HepG2 (cell line): ENCODE measurements at regions of chr2 and their contacts with region 1.

Region 1: DNA sequence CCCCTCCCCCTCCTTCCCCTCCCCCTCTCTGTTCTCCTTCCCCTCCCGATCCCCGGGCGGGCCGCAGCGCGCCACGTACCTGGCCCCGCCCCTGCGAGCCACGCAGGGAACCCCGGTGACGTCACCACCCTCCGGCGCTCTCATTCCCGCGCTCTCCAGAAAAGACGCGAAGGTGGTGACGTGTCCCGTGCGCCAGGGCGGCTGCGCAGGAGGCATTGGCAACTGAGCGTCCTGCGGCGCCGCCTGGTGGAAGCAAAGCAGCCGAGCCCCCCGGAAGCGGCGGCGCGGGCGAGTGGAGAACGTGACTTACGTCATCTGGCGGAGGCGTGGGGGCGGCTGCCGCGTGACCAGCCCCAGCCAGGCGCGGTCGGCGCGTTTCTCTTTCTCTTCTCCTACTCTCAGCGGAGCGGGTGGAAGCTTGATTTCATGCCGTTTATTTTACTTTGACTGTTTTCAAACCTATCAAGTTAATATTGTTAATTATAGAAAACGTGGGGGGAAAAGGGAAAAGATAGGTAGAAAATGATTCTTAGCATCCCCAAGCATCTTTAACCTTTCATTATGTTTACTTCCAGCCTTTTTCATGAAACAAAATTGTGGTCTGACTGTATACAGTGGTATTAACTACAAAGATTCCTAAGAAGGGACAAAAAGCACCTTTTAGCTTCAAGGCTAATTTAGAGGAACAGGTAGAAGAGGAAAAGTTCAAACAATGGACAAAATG is 48.1 kb downstream of the C2orf42 start:
- DNase-seq: peak; percentile 99
- ATAC-seq: peak; percentile 68
- H3K4me3 ChIP-seq: peak overlapping the region; percentile 43 to 67 (median 61)
- H3K27ac ChIP-seq: peak overlapping the region; percentile 93
- H3K4me1 ChIP-seq: peaks cover 56% of the 10 kb centered on the region
- H3K27me3 ChIP-seq: no peaks in the 10 kb centered on the region
- CTCF ChIP-seq: peak; percentile 100
- EP300 ChIP-seq: peak; percentile 72 to 87
- POLR2A ChIP-seq: peak in 1 of 2 experiments; percentile 55; a peak in 2 of 4 replicates
- RAD21 ChIP-seq: peak; percentile 100

Region 2: GRCh38 chr2:70070541-70071268 is 72.0 kb before region 1 on chr2:
- CTCF ChIA-PET with region 1: interaction called, 3 read pairs
- POLR2A ChIA-PET with region 1: interaction called, 6 read pairs
- in situ Hi-C with region 1: no loop called
- intact Hi-C with region 1: loop called (anchors 5 kb)
- DNase-seq: peak; percentile 87
- ATAC-seq: peak; percentile 90
- H3K4me3 ChIP-seq: no peak overlapping the region
- H3K27ac ChIP-seq: peak overlapping the region; percentile 41
- H3K4me1 ChIP-seq: peaks cover 36% of the 10 kb centered on the region
- H3K27me3 ChIP-seq: no peaks in the 10 kb centered on the region
- CTCF ChIP-seq: peak; percentile 91
- EP300 ChIP-seq: no peak
- POLR2A ChIP-seq: no peak
- RAD21 ChIP-seq: peak; percentile 85

Region 3: GRCh38 chr2:70094978-70095719 is 47.6 kb before region 1 on chr2:
- CTCF ChIA-PET with region 1: no interaction called
- POLR2A ChIA-PET with region 1: interaction called, 124 read pairs
- in situ Hi-C with region 1: no loop called
- intact Hi-C with region 1: no loop called
- DNase-seq: peak; percentile 87
- ATAC-seq: peak; percentile 73
- H3K4me3 ChIP-seq: peak overlapping the region; percentile 36 to 67 (median 50)
- H3K27ac ChIP-seq: peak overlapping the region; percentile 73
- H3K4me1 ChIP-seq: peaks cover 46% of the 10 kb centered on the region
- H3K27me3 ChIP-seq: no peaks in the 10 kb centered on the region
- CTCF ChIP-seq: no peak
- EP300 ChIP-seq: peak in 1 of 2 experiments; percentile 51; a peak in 2 of 4 replicates
- POLR2A ChIP-seq: peak; percentile 24 to 48; a peak in 1 of 4 replicates
- RAD21 ChIP-seq: no peak; the same call in 1 of the 2 replicates

Region 4: GRCh38 chr2:70132244-70133126 is 10.3 kb before region 1 on chr2:
- CTCF ChIA-PET with region 1: no interaction called
- POLR2A ChIA-PET with region 1: interaction called, 65 read pairs
- in situ Hi-C with region 1: no loop called
- intact Hi-C with region 1: no loop called
- DNase-seq: peak; percentile 86
- ATAC-seq: peak; percentile 83
- H3K4me3 ChIP-seq: peak overlapping the region; percentile 53 to 74 (median 73)
- H3K27ac ChIP-seq: peak overlapping the region; percentile 86
- H3K4me1 ChIP-seq: peaks cover 68% of the 10 kb centered on the region
- H3K27me3 ChIP-seq: no peaks in the 10 kb centered on the region
- CTCF ChIP-seq: no peak
- EP300 ChIP-seq: no peak; a peak in 1 of 4 replicates
- POLR2A ChIP-seq: peak; percentile 31 to 83; a peak in 3 of 4 replicates
- RAD21 ChIP-seq: 0 out of 2 replicates have a peak, but pooled peaks have one; percentile 21

Region 5: GRCh38 chr2:70248181-70248847 is 105.6 kb after region 1 on chr2 and contains the start of gene TIA1:
- CTCF ChIA-PET with region 1: no interaction called
- POLR2A ChIA-PET with region 1: interaction called, 4 read pairs
- in situ Hi-C with region 1: no loop called
- intact Hi-C with region 1: loop called (anchors 1 kb)
- DNase-seq: peak; percentile 99
- ATAC-seq: peak; percentile 93
- H3K4me3 ChIP-seq: peak within 1 kb of the TSS; percentile 96 to 98 (median 98)
- H3K27ac ChIP-seq: peak within 1 kb of the TSS; percentile 98
- H3K4me1 ChIP-seq: peaks cover 47% of the 10 kb centered on the region
- H3K27me3 ChIP-seq: no peaks in the 10 kb centered on the region; a peak in 1 of 5 replicates
- CTCF ChIP-seq: no peak
- EP300 ChIP-seq: peak in 1 of 2 experiments; percentile 54; a peak in 1 of 4 replicates
- POLR2A ChIP-seq: peak; percentile 92 to 98
- RAD21 ChIP-seq: peak; percentile 37; the same call in 1 of the 2 replicates
- total RNA-seq, gene TIA1: 199 and 209 TPM in 2 replicates

Region 6: DNA sequence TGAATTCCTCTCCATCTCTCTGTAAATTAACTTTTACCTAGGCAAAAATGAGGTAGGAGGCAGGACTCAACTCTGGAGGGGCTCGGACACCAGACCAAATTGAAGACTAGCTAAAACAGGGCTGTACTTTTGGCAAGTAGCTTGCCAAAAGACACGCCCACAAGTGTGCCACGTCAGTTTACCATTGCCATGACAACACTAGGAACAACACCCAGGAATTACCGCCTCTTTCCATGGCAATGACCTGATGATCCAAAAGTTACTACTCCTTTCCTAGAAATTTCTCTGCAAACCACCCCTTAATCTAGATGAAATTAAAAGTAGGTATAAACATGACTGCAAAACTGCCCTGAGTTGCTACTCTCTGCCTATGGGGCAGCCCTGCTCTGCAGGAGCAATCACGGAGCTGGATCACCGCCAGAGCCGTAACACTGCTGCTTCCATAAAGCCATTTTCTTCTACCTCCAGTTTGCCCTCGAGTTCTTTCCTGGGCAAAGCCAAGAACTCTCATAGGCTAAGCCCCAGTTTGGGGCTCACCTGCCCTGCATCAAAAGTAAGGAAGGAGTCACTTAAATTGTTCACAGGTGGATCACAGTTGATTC is 225.1 kb after region 1 on chr2:
- CTCF ChIA-PET with region 1: no interaction called
- POLR2A ChIA-PET with region 1: no interaction called
- in situ Hi-C with region 1: no loop called
- intact Hi-C with region 1: no loop called
- DNase-seq: no peak
- ATAC-seq: no peak
- H3K4me3 ChIP-seq: no peak overlapping the region
- H3K27ac ChIP-seq: no peak overlapping the region
- H3K4me1 ChIP-seq: no peaks in the 10 kb centered on the region
- H3K27me3 ChIP-seq: peaks cover 3 to 39% of the 10 kb centered on the region in 2 experiments; a peak in 3 of 5 replicates
- CTCF ChIP-seq: no peak
- EP300 ChIP-seq: no peak
- POLR2A ChIP-seq: no peak
- RAD21 ChIP-seq: no peak